CD4-positive, alpha-beta memory T cell (primary cell): ENCODE measurements at regions of chr1 and their contacts with region 1.

Region 1: DNA sequence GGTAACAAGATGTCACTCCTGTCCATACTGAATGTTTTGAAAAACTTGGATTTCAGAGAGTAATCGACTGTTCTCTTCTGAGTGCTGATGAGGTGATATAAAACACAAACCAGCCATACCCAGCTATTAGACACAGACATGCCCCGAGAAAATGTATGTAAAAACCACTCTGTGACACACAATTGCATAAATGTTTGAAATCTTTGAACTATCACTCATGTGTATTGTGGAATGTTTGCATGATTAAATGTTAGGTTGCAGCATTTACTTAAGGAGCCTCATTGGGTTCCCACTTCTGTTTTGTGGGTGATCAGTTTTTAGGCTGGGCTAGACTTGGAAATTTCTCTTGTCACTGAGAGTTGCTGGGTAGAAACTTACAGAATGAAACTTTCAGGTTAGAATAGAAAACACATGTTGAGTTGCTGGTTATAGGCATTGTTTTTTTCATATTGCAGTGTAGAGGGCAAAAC is 270.4 kb upstream of the B3GALT2 start:
- DNase-seq: peak in 1 of 5 donors; percentile 26
- H3K4me3 ChIP-seq: peak overlapping the region in 1 of 2 donors; percentile 28
- H3K4me3 Mint-ChIP-seq: no peak overlapping the region
- H3K27ac ChIP-seq: peak overlapping the region; percentile 67
- H3K27ac Mint-ChIP-seq: no peak overlapping the region
- H3K4me1 ChIP-seq: peaks cover 77% of the 10 kb centered on the region
- H3K4me1 Mint-ChIP-seq: peaks cover 21 to 33% (median 25%) of the 10 kb centered on the region in 4 donors
- H3K27me3 ChIP-seq: no peaks in the 10 kb centered on the region
- H3K27me3 Mint-ChIP-seq: no peaks in the 10 kb centered on the region

Region 2: DNA sequence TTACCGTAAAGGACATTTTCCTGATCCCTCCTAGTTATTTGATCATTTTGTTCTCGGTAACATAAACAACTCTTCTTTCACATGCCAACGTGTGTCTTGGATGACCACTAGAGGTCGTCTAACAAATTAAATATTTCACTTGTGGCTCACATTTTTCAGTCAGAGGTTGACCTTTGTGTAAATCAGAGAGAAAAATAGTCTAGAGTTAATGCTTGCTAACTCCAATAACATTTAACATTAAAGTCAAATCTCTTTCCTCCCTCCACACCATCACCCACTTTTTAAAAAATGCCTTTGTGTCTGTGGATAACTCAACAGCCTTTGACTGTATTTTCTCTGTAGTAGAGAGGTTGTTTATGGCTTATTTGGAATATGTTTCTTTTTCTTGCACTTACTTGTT is 49.9 kb before region 1 on chr1:
- CTCF ChIA-PET with region 1: interaction called, 3 read pairs
- POLR2A ChIA-PET with region 1: interaction called, 117 read pairs
- intact Hi-C with region 1: no loop called
- DNase-seq: peak in 4 of 5 donors; percentile 48 to 63 (median 56)
- H3K4me3 ChIP-seq: no peak overlapping the region
- H3K4me3 Mint-ChIP-seq: peak overlapping the region in 6 of 8 donors; percentile 0 to 29 (median 8)
- H3K27ac ChIP-seq: no peak overlapping the region
- H3K27ac Mint-ChIP-seq: peak overlapping the region in 4 of 7 donors; percentile 15 to 81 (median 52)
- H3K4me1 ChIP-seq: peaks cover 26% of the 10 kb centered on the region
- H3K4me1 Mint-ChIP-seq: peaks cover 21 to 40% (median 29%) of the 10 kb centered on the region in 4 donors
- H3K27me3 ChIP-seq: no peaks in the 10 kb centered on the region
- H3K27me3 Mint-ChIP-seq: no peaks in the 10 kb centered on the region

Region 3: DNA sequence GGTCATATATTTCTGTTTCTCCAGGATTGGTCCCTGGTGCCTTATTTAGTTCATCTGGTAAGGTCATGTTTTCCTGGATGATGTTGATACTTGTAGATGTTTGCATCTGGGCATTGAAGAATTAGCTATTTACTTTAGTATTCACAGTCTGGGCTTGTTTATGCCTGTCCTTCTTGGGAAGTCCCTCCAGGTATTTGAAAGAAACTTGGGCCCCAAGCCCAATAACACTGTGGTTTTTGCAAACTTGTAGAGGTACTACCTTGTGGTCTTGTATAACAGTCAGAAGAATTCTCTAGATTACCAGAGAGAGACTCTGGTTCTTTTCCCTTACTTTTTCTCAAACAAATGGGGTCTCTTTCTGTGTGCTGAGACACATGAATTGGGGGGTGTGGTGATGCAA is 19.1 kb before region 1 on chr1:
- CTCF ChIA-PET with region 1: interaction called, 3 read pairs
- POLR2A ChIA-PET with region 1: interaction called, 11 read pairs
- intact Hi-C with region 1: no loop called
- DNase-seq: peak; percentile 17 to 55 (median 31)
- H3K4me3 ChIP-seq: no peak overlapping the region
- H3K4me3 Mint-ChIP-seq: peak overlapping the region in 6 of 8 donors; percentile 21 to 72 (median 52)
- H3K27ac ChIP-seq: peak overlapping the region; percentile 0
- H3K27ac Mint-ChIP-seq: peak overlapping the region; percentile 34 to 93 (median 79)
- H3K4me1 ChIP-seq: peaks cover 21% of the 10 kb centered on the region
- H3K4me1 Mint-ChIP-seq: peaks cover 19 to 38% (median 30%) of the 10 kb centered on the region in 4 donors
- H3K27me3 ChIP-seq: no peaks in the 10 kb centered on the region
- H3K27me3 Mint-ChIP-seq: no peaks in the 10 kb centered on the region

Region 4: DNA sequence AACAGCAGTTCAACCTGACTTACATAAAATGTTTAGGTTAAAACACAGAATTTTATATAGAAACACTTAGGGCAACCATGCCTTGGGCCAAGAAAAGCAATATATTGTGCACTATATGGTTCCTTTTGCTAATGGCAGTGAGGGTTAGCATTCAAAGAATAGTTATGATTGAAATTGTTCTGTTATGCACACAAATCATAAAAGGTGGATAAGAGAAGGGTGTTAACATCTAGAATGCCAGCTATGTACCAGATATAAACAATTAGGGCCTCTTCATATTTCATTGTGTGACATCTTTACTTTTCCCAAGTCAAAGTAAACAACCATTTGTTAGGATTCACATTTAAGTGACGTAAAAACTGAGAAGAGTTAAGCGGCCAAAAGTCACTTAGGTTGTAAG is 37.5 kb after region 1 on chr1:
- CTCF ChIA-PET with region 1: no interaction called
- POLR2A ChIA-PET with region 1: interaction called, 11 read pairs
- intact Hi-C with region 1: no loop called
- DNase-seq: no peak
- H3K4me3 ChIP-seq: no peak overlapping the region
- H3K4me3 Mint-ChIP-seq: no peak overlapping the region
- H3K27ac ChIP-seq: no peak overlapping the region
- H3K27ac Mint-ChIP-seq: peak overlapping the region in 4 of 7 donors; percentile 8 to 38 (median 26)
- H3K4me1 ChIP-seq: peaks cover 27% of the 10 kb centered on the region
- H3K4me1 Mint-ChIP-seq: peaks cover 22 to 45% (median 40%) of the 10 kb centered on the region in 4 donors
- H3K27me3 ChIP-seq: no peaks in the 10 kb centered on the region
- H3K27me3 Mint-ChIP-seq: no peaks in the 10 kb centered on the region

Region 5: GRCh38 chr1:194289569-194290266 is 832.9 kb after region 1 on chr1:
- CTCF ChIA-PET with region 1: interaction called, 5 read pairs
- POLR2A ChIA-PET with region 1: interaction called, 11 read pairs
- intact Hi-C with region 1: no loop called
- DNase-seq: peak; percentile 72 to 89 (median 81)
- H3K4me3 ChIP-seq: peak overlapping the region; percentile 2 to 42
- H3K4me3 Mint-ChIP-seq: peak overlapping the region; percentile 60 to 84 (median 75)
- H3K27ac ChIP-seq: peak overlapping the region; percentile 50
- H3K27ac Mint-ChIP-seq: peak overlapping the region; percentile 12 to 86 (median 75)
- H3K4me1 ChIP-seq: peaks cover 22% of the 10 kb centered on the region
- H3K4me1 Mint-ChIP-seq: peaks cover 22 to 31% (median 24%) of the 10 kb centered on the region in 4 donors
- H3K27me3 ChIP-seq: no peaks in the 10 kb centered on the region
- H3K27me3 Mint-ChIP-seq: no peaks in the 10 kb centered on the region